Posterior vena cava (tissue), 2 donors: ENCODE measurements at regions of chr3 and their contacts with region 1.

Region 1: DNA sequence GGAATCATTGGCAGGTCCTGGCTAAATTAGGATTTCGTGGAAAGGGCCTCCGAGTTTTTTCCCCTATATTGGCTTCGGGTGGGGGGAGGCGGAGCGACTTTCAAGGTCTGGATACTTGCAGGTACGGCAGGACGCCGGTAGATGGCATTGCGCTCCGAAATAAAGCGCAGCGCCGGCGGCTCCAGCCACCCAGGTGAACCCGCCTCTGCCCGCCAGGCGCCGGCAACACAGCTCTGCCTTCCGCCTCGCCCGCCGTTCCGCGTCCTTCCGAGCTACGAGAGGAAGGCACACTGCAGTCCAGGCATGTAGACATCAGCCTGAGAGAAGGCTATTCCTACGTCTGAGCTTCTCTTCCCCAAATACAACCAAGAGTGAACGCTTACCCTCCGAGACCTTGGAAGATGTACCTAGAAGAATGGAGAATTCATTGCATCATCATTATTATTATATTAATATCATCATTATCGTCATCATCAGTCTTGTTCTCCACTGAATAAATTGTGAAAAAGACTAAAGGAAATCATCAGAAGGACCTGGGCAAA is 514.1 kb downstream of the MECOM start:
- DNase-seq: peak; percentile 92

Region 2: DNA sequence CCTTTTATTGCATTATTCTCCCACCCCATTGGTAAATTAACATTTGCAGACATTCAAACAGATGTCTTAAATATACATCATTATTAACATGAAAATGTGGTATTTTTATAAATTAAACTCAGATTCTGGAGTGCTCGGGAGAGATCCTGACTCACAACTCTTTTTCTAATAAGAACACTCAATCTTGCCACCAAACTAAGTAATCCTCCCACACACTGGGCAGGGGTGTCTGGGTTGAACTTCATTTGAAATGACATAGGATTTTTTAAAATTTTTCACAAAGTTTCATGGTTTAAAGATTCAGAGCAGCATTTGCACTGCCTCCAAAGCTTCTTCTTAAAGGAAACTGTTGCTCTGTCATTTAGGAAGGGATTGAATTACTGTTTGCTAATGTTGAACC is 240.2 kb before region 1 on chr3:
- intact Hi-C with region 1: no loop called
- DNase-seq: no peak

Region 3: DNA sequence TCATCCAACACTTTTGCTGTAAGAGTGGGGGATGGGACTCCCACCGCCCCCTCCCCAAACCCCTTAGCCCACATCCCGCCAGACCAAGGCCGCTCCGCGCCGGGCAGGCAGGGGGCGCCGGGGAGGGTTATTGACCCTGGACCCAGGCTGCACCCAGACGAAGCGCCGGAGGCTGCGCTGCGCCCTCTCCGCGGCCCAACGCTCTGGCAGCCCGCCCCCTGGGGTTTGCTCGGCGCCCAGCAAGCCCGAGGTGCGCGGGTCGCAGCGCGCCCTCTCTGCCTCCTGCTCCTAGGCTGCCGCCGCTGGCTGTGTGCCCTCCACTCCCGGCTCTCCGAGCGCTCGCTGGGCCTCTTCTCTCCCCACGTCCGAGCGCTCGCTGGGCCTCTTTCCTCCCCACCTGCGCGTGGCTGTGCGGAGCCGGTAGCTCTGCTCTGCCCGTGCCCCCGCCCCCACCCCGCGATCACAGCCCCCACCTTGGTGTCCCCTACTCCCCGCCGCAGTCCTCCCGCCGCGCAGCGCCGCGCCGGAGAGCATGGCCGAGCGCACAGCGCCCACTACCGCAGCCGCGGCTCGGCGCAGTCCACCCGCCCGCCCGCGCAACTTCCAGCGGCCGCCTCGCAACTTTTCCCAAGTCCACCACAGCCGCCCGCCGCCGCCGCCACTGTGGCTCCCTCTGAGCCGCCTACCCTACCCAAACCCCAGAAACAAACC is 512.9 kb after region 1 on chr3:
- intact Hi-C with region 1: loop called (anchors 5 kb)
- DNase-seq: peak; percentile 88

Region 4: DNA sequence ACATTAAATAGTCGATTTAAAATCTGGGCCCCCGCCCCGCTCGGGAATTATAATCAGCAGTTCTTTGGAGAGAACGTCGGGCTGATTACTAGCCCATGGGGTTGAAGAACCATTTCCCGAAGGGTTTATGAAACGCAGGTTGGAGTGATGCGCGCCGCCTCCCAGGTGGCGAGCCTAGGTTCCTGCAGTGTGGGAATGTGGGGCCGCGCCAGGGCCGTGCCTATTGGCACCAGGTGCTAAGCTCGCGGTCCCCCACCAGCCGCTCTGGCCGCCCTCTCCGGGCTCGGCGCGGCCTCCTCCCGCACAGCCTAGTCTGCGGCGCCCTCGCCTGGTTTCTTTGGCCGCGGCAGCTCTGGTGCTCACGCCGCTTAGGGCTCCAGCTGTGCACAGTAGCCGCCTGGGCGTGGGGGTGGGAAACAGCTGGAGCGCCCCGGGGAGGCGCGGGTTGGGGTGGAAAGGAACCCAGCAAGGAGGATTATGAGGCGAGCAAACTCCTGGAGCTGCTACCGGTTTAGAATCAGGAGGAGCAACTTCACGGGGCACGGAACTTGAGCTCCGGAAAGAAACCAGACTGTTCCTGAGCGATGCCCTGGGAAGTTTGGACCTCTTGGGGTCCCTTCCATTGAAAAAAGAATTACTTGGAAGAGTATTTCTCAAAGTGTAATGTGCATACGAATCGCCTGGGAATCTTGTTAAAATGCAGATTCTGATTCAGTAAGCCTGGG is 519.7 kb after region 1 on chr3:
- intact Hi-C with region 1: loop called (anchors 5 kb)
- DNase-seq: peak; percentile 91

Region 5: GRCh38 chr3:169744366-169745054 is 595.1 kb after region 1 on chr3:
- intact Hi-C with region 1: loop called in 1 of 2 experiments (anchors 10 kb)
- DNase-seq: no peak